CD4-positive, alpha-beta memory T cell (primary cell): ENCODE measurements at regions of chr6 and their contacts with region 1.

Region 1: DNA sequence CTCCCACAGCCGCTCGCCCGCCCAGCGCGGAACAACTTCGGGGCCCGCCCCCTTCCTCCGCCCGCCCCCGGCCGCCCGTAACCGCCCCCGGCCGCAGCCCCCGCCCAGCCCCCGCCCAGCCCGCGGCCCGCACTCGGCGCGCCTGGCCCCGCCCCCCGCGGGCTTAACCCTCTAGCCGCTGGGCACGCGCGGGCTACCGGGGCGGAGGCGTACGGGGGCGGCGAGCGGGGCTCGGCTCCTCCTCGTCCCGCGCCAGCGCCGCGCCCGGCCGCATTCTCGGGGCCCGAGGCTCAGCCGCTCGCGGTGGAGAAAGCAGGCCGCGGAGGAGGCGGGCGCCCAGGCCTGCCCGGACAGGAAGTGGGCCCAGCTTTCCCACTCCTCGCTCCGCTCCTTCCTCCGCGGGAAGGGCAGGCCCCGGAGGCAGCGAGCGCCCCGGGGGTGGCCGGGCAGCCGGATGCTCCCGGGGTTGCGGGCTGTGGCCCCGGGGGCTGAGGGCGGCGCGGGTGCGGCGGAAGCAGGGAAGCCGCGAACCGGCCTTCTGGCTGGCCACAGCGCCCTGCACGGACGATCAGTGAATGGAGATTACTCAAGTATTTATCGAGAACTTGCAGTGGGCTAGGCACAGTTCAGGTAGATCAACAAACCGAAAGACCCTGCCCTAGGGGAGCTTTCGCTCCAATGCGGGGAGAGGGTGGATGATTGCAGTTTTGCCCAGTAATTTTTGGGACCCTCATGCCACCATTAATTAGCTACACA is at the start of gene TRAM2:
- DNase-seq: peak; percentile 73 to 83 (median 79)
- H3K4me3 ChIP-seq: peak within 1 kb of the TSS; percentile 19 to 81
- H3K4me3 Mint-ChIP-seq: peak within 1 kb of the TSS; percentile 80 to 95 (median 88)
- H3K27ac ChIP-seq: peak within 1 kb of the TSS; percentile 65
- H3K27ac Mint-ChIP-seq: peak within 1 kb of the TSS; percentile 88 to 95 (median 91)
- H3K4me1 ChIP-seq: peaks cover 46% of the 10 kb centered on the region
- H3K4me1 Mint-ChIP-seq: peaks cover 32 to 60% (median 38%) of the 10 kb centered on the region in 4 donors
- H3K27me3 ChIP-seq: no peaks in the 10 kb centered on the region
- H3K27me3 Mint-ChIP-seq: no peaks in the 10 kb centered on the region
- total RNA-seq, gene TRAM2: 10.7 to 11.3 TPM

Region 2: DNA sequence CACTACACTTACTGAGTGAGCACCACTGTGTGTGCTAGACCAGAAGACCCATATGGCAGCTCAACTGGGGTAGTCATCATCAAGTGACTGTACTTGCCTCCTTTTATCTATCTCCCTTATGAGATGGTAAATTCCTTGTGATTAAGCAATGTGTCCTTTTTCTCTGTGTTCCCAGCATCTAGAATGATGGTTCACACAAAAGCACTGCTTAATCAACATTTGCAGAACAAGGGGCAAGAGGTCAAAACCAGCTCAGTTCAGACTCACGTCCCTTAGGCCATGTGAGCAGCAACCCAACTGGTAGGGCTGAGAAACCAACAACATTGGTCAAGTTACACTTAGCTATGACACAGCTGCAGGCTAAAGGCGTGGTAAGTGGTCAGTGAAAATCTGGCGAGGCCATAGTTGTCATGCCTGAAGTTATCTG is 10.3 kb before region 1 on chr6:
- CTCF ChIA-PET with region 1: no interaction called
- POLR2A ChIA-PET with region 1: interaction called, 13 read pairs
- intact Hi-C with region 1: no loop called
- DNase-seq: no peak
- H3K4me3 ChIP-seq: no peak overlapping the region
- H3K4me3 Mint-ChIP-seq: peak overlapping the region in 1 of 8 donors; percentile 16
- H3K27ac ChIP-seq: no peak overlapping the region
- H3K27ac Mint-ChIP-seq: peak overlapping the region in 3 of 7 donors; percentile 19 to 48 (median 42)
- H3K4me1 ChIP-seq: peaks cover 12% of the 10 kb centered on the region
- H3K4me1 Mint-ChIP-seq: peaks cover 26 to 71% (median 53%) of the 10 kb centered on the region in 4 donors
- H3K27me3 ChIP-seq: no peaks in the 10 kb centered on the region
- H3K27me3 Mint-ChIP-seq: no peaks in the 10 kb centered on the region

Region 3: GRCh38 chr6:52653151-52653550 is 76.0 kb after region 1 on chr6:
- CTCF ChIA-PET with region 1: interaction called, 4 read pairs
- POLR2A ChIA-PET with region 1: interaction called, 6 read pairs
- intact Hi-C with region 1: loop called (anchors 2 kb)
- DNase-seq: no peak
- H3K4me3 ChIP-seq: no peak overlapping the region
- H3K4me3 Mint-ChIP-seq: no peak overlapping the region
- H3K27ac ChIP-seq: no peak overlapping the region
- H3K27ac Mint-ChIP-seq: peak overlapping the region in 1 of 7 donors; percentile 53
- H3K4me1 ChIP-seq: no peaks in the 10 kb centered on the region
- H3K4me1 Mint-ChIP-seq: peaks cover 3 to 9% (median 4%) of the 10 kb centered on the region in 4 donors
- H3K27me3 ChIP-seq: peaks cover 6% of the 10 kb centered on the region
- H3K27me3 Mint-ChIP-seq: peaks cover 15 to 18% of the 10 kb centered on the region in 2 donors

Region 4: DNA sequence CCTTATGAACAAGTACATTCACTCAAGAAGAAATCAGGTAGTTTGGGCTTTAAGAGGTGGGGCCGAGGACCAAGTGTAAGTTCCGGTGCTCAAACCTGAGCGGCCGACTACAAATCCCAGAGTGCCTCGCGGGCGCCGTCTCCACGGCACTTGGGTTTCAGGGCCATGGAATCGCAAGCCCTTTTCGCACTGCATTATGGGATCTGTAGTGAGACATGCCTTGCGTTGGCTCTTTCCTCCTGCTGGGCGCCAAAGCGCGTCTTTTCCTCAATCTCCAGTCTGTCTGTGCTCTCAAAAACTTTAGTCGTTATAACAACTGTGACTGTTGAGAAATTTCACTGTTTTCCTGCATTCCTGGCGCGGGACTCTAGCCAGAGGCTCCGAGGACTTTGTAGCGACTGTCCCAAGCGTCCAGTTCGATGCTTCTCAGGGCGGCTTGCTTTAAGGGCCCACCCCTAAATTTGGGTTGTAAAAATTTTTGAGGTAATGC is 487.6 kb after region 1 on chr6:
- CTCF ChIA-PET with region 1: no interaction called
- POLR2A ChIA-PET with region 1: no interaction called
- intact Hi-C with region 1: loop called (anchors 2 kb)
- DNase-seq: peak; percentile 93 to 99 (median 96)
- H3K4me3 ChIP-seq: peak overlapping the region; percentile 74 to 99
- H3K4me3 Mint-ChIP-seq: peak overlapping the region; percentile 98 to 100 (median 99)
- H3K27ac ChIP-seq: peak overlapping the region; percentile 63
- H3K27ac Mint-ChIP-seq: peak overlapping the region; percentile 86 to 99 (median 99)
- H3K4me1 ChIP-seq: peaks cover 52% of the 10 kb centered on the region
- H3K4me1 Mint-ChIP-seq: peaks cover 34 to 73% (median 54%) of the 10 kb centered on the region in 4 donors
- H3K27me3 ChIP-seq: no peaks in the 10 kb centered on the region
- H3K27me3 Mint-ChIP-seq: no peaks in the 10 kb centered on the region

Region 5: DNA sequence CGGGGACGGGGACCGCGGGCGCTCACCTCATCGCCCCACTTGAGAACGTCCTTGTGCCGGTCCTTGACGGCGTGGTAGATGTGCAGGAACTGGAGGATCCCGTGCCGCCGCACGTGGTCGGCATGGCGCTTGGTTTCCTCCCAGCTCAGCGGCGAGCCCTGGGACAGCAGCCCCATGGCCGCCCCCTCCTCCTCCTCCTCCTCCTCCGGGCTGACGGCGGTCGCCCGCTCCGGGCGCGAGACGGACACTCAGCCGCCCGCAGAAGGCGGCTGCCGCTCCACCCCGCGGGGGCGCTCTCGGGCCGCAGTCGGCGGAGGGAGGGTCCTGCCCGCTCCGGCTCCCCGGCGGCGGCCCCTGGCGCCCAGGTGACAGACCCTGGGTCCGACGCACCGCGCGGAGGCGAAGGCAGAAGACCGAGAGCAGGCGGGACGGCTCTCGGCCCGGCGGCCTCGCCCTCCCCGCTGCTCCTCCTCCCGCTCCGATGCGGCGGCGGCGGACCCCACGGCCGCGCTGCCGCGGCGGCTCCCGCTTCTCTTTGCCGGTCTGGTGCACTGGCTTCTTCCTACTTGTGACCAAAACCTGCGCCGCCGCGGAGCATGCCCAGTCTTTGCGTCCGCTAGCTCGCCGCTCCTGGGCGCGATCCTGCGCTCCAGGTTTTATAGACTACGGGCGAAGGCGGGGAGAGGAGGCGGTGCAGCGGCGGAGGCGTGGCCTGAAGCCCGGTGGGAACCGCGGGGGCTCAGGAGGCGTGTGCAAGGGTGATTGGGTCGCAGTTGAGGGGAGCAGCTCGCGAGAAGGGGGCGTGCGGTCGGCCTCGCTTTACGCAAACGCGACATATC is 967.5 kb after region 1 on chr6 and contains the start of gene GCLC:
- CTCF ChIA-PET with region 1: no interaction called
- POLR2A ChIA-PET with region 1: no interaction called
- intact Hi-C with region 1: loop called (anchors 2 kb)
- DNase-seq: peak; percentile 82 to 85 (median 84)
- H3K4me3 ChIP-seq: peak within 1 kb of the TSS; percentile 61 to 63
- H3K4me3 Mint-ChIP-seq: peak within 1 kb of the TSS; percentile 95 to 99 (median 98)
- H3K27ac ChIP-seq: peak within 1 kb of the TSS; percentile 59
- H3K27ac Mint-ChIP-seq: peak within 1 kb of the TSS; percentile 79 to 96 (median 94)
- H3K4me1 ChIP-seq: peaks cover 51% of the 10 kb centered on the region
- H3K4me1 Mint-ChIP-seq: peaks cover 47 to 73% (median 59%) of the 10 kb centered on the region in 4 donors
- H3K27me3 ChIP-seq: no peaks in the 10 kb centered on the region
- H3K27me3 Mint-ChIP-seq: no peaks in the 10 kb centered on the region
- total RNA-seq, gene GCLC: 39.6 to 40.9 TPM